ENCODE measurements at regions of chr20 and their contacts with region 1.

Region 1: DNA sequence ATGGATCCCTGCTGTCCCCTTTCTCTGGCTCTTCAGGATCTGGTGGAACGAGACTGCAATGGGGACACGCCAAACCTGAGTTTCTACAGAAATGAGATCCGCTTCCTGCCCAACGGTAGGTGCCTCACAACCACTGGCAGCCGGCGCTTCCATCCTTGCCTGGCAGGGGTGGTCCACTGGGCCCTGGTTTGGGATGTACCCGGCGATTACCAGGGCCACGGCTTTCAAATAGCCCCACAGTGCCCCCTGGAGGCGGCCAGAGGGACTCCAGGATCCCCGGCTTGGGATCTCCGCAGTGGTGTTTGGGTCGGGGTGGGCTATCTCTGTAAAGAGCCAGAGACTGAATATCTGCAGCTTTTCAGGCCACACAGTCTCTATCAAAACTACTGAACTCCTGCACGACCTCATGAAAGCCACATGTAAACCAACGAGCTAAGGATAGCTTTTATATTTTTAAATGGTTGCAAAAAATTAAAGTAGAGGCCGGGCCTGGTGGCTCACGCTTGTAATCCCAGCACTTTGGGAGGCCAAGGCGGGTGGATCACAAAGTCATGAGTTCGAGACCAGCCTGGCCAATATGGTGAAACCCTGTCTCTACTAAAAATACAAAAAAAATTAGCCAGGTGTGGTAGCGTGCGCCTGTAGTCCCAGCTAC is 3.7 kb downstream of the OGFR start:
- DNase-seq: peak; percentile 74
- H3K4me3 Mint-ChIP-seq: peak overlapping the region; percentile 43
- H3K27ac Mint-ChIP-seq: peak overlapping the region; percentile 57
- H3K4me1 Mint-ChIP-seq: peaks cover 29% of the 10 kb centered on the region
- H3K27me3 Mint-ChIP-seq: no peaks in the 10 kb centered on the region

Region 2: DNA sequence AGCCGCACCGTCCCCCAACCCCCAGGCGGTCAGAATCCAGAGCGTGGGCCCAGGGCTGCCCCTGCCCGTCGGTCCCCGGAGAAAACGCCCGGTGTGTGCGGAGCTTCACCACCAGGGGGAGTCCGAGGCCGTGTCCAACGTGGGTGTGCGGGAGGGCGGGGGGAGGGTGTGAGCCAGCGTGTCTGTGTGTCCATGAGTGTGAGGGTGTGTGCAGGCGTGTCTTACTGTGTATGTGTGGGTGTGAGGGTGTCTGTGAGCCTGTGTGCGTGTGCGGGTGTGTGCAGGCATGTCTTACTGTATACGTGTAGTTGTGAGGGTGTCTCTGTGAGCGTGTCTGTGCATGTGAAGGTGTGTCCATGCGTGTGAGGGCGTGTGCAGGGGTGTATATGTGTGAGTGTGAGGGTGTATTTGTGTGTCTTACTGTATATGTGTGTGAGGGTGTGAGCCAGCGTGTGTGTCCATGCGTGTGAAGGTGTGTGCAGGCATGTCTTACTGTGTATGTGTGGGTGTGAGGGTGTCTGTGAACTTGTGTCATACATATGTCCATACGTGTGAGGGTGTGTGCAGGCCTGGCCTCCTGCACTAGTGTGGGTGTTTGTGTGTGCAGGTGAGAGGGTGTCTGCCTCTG is 308.0 kb before region 1 on chr20:
- CTCF ChIA-PET with region 1: interaction called, 10 read pairs
- POLR2A ChIA-PET with region 1: interaction called, 5 read pairs
- DNase-seq: peak; percentile 84
- H3K4me3 Mint-ChIP-seq: no peak overlapping the region
- H3K27ac Mint-ChIP-seq: peak overlapping the region; percentile 67
- H3K4me1 Mint-ChIP-seq: peaks cover 25% of the 10 kb centered on the region
- H3K27me3 Mint-ChIP-seq: no peaks in the 10 kb centered on the region

Region 3: GRCh38 chr20:62796699-62797491 is 11.4 kb before region 1 on chr20:
- CTCF ChIA-PET with region 1: interaction called, 15 read pairs
- POLR2A ChIA-PET with region 1: no interaction called
- DNase-seq: no peak
- H3K4me3 Mint-ChIP-seq: peak overlapping the region; percentile 78
- H3K27ac Mint-ChIP-seq: peak overlapping the region; percentile 82
- H3K4me1 Mint-ChIP-seq: peaks cover 43% of the 10 kb centered on the region
- H3K27me3 Mint-ChIP-seq: no peaks in the 10 kb centered on the region

Region 4: GRCh38 chr20:62822788-62823651 is 14.7 kb after region 1 on chr20:
- CTCF ChIA-PET with region 1: interaction called, 17 read pairs
- POLR2A ChIA-PET with region 1: no interaction called
- DNase-seq: peak; percentile 53
- H3K4me3 Mint-ChIP-seq: no peak overlapping the region
- H3K27ac Mint-ChIP-seq: no peak overlapping the region
- H3K4me1 Mint-ChIP-seq: no peaks in the 10 kb centered on the region
- H3K27me3 Mint-ChIP-seq: peaks cover 4% of the 10 kb centered on the region